ENCODE measurements at regions of chr6 and their contacts with region 1.

Region 1: GRCh38 chr6:139364302-139364981 is 10.0 kb downstream of the CITED2 start:
- DNase-seq: peak; percentile 56 to 69 (median 65)
- ATAC-seq: peak; percentile 68
- H3K4me3 ChIP-seq: no peak overlapping the region
- H3K27ac ChIP-seq: no peak overlapping the region
- H3K4me1 ChIP-seq: peaks cover 0 to 13% of the 10 kb centered on the region in 2 experiments; a peak in 3 of 5 replicates
- H3K27me3 ChIP-seq: 0 out of 5 replicates have a peak, but pooled peaks cover 0 to 6% of the 10 kb centered on the region in 2 experiments
- CTCF ChIP-seq: peak; percentile 52 to 88 (median 54); a peak in 5 of 6 replicates
- EP300 ChIP-seq: no peak
- POLR2A ChIP-seq: no peak
- RAD21 ChIP-seq: peak; percentile 98

Region 2: DNA sequence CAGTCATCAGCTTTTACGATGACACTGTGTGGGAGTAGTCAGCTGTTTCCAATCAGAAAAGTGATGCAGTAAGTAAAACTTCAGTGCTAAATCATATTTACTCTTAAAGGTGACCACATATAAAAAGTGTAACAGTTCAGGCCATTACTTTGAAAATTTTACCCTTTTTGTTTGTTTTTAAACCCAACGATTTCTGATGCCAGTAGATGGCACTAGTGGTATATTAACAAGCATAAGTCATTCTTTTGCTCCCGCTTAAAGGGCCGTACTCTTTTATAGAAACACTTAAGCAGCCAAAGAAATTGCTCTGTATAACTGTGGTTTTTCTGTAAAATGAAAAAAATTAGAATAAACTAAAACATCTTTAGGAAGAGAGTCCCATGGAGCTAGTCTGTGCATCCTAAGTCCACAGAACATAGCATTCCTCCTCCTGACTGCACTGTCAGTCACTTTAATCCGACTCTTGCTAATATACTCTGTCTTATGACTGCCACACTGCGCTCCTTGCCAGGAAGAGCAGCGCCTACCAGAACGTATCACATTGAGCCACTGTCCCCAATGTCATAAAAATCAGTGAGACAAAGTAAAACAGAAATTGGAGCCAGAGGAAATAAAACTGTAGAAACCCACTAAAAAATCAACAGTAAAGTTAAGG is 935.4 kb before region 1 on chr6:
- CTCF ChIA-PET with region 1: no interaction called
- POLR2A ChIA-PET with region 1: no interaction called
- in situ Hi-C with region 1: no loop called
- intact Hi-C with region 1: loop called (anchors 10 kb)
- DNase-seq: peak; percentile 33 to 46 (median 40)
- ATAC-seq: peak; percentile 73
- H3K4me3 ChIP-seq: no peak overlapping the region
- H3K27ac ChIP-seq: no peak overlapping the region
- H3K4me1 ChIP-seq: peaks cover 0 to 7% of the 10 kb centered on the region in 2 experiments; a peak in 1 of 5 replicates
- H3K27me3 ChIP-seq: peaks cover 56 to 62% of the 10 kb centered on the region in 2 experiments
- CTCF ChIP-seq: peak; percentile 45 to 82 (median 45); a peak in 4 of 6 replicates
- EP300 ChIP-seq: no peak
- POLR2A ChIP-seq: no peak
- RAD21 ChIP-seq: peak; percentile 74 to 79

Region 3: DNA sequence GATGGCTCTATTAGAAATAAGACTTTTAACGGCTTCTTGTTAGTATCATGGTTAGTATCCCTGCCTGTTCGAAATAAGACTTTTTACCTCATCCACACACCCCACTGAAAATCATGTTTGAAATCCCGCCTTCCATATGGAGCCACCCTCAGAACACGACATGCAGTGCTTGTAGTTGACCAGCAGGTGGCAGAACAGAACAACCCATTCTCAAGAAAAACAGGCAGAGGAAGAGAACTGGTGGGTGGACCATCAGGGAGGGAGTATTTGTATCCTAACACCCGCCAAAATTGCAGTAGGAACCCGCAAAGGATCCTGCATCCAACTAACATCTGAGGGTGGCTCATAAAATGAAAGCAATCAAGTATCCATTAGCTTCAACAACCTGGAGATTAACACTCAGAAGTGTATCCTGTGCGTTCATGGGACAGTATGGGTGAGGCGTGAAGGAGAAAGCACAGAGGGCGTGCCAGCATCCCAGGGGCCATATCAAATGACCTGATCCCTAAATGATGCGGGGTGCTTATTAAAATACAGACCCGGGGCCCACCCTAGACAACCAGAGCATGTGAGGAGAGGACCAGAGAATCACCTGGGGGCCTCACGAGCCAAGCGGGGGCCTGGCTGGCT is 775.5 kb before region 1 on chr6:
- CTCF ChIA-PET with region 1: interaction called, 12 read pairs
- POLR2A ChIA-PET with region 1: no interaction called
- in situ Hi-C with region 1: loop called (anchors 5 kb)
- intact Hi-C with region 1: loop called (anchors 1 kb)
- DNase-seq: peak; percentile 80 to 82 (median 82)
- ATAC-seq: peak; percentile 89
- H3K4me3 ChIP-seq: no peak overlapping the region
- H3K27ac ChIP-seq: no peak overlapping the region
- H3K4me1 ChIP-seq: no peaks in the 10 kb centered on the region
- H3K27me3 ChIP-seq: peaks cover 14 to 34% of the 10 kb centered on the region in 2 experiments; a peak in 4 of 5 replicates
- CTCF ChIP-seq: peak; percentile 88 to 95 (median 93)
- EP300 ChIP-seq: no peak
- POLR2A ChIP-seq: no peak
- RAD21 ChIP-seq: peak; percentile 82 to 88

Region 4: DNA sequence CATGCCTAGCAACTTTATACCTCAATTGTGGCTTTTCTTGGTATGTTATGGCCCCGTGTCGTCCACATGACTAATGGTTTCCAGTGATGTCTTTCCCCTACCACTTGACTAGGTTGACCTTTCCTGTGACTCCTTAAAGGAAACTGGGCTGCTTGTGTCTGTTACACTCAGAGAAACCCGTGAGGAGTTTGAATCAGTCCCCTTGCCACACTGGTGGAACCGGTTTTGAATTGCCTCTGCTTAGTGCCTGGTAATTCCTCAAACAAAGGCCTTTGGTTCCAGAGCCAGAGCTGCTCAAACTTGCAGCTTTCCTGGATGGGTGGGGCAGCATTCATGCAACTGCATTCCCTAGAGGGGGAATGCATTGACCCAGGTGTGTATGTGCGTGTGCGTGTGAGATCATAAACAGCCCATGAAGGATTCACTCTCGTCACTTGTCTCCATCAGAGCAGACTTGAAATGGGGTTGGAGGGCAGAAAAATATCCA is 546.6 kb before region 1 on chr6:
- CTCF ChIA-PET with region 1: interaction called, 19 read pairs
- POLR2A ChIA-PET with region 1: no interaction called
- in situ Hi-C with region 1: loop called (anchors 5 kb)
- intact Hi-C with region 1: loop called (anchors 1 kb)
- DNase-seq: peak in 1 of 4 experiments; percentile 11
- ATAC-seq: no peak
- H3K4me3 ChIP-seq: no peak overlapping the region
- H3K27ac ChIP-seq: no peak overlapping the region
- H3K4me1 ChIP-seq: no peaks in the 10 kb centered on the region
- H3K27me3 ChIP-seq: peaks cover 33 to 37% of the 10 kb centered on the region in 2 experiments
- CTCF ChIP-seq: no peak
- EP300 ChIP-seq: no peak
- POLR2A ChIP-seq: no peak
- RAD21 ChIP-seq: no peak

Region 5: GRCh38 chr6:139124887-139125672 is 239.4 kb before region 1 on chr6:
- CTCF ChIA-PET with region 1: no interaction called
- POLR2A ChIA-PET with region 1: no interaction called
- in situ Hi-C with region 1: loop called (anchors 10 kb)
- intact Hi-C with region 1: loop called (anchors 1 kb)
- DNase-seq: peak; percentile 32 to 64 (median 48)
- ATAC-seq: peak; percentile 98
- H3K4me3 ChIP-seq: no peak overlapping the region
- H3K27ac ChIP-seq: no peak overlapping the region
- H3K4me1 ChIP-seq: no peaks in the 10 kb centered on the region; a peak in 1 of 5 replicates
- H3K27me3 ChIP-seq: peaks cover 4 to 5% of the 10 kb centered on the region in 2 experiments; a peak in 3 of 5 replicates
- CTCF ChIP-seq: peak; percentile 60 to 65 (median 65)
- EP300 ChIP-seq: no peak
- POLR2A ChIP-seq: no peak
- RAD21 ChIP-seq: peak; percentile 92 to 96

Region 6: GRCh38 chr6:139219271-139219729 is 145.1 kb before region 1 on chr6:
- CTCF ChIA-PET with region 1: no interaction called
- POLR2A ChIA-PET with region 1: no interaction called
- in situ Hi-C with region 1: no loop called
- intact Hi-C with region 1: loop called (anchors 1 kb)
- DNase-seq: peak in 3 of 4 experiments; percentile 20 to 73 (median 48)
- ATAC-seq: peak; percentile 99
- H3K4me3 ChIP-seq: no peak overlapping the region
- H3K27ac ChIP-seq: no peak overlapping the region
- H3K4me1 ChIP-seq: no peaks in the 10 kb centered on the region; a peak in 1 of 5 replicates
- H3K27me3 ChIP-seq: no peaks in the 10 kb centered on the region
- CTCF ChIP-seq: peak; percentile 71 to 75 (median 74)
- EP300 ChIP-seq: no peak
- POLR2A ChIP-seq: no peak
- RAD21 ChIP-seq: peak; percentile 81 to 87

Region 7: GRCh38 chr6:139996253-139996834 is 631.9 kb after region 1 on chr6:
- CTCF ChIA-PET with region 1: interaction called, 11 read pairs
- POLR2A ChIA-PET with region 1: no interaction called
- in situ Hi-C with region 1: loop called (anchors 10 kb)
- intact Hi-C with region 1: loop called (anchors 1 kb)
- DNase-seq: peak in 2 of 4 experiments; percentile 47 to 62
- ATAC-seq: peak; percentile 98
- H3K4me3 ChIP-seq: no peak overlapping the region
- H3K27ac ChIP-seq: no peak overlapping the region
- H3K4me1 ChIP-seq: no peaks in the 10 kb centered on the region
- H3K27me3 ChIP-seq: no peaks in the 10 kb centered on the region
- CTCF ChIP-seq: peak; percentile 44 to 71 (median 68); a peak in 5 of 6 replicates
- EP300 ChIP-seq: no peak
- POLR2A ChIP-seq: no peak
- RAD21 ChIP-seq: peak; percentile 86 to 93